ENCODE measurements at regions of chr12 and their contacts with region 1.

Region 1: DNA sequence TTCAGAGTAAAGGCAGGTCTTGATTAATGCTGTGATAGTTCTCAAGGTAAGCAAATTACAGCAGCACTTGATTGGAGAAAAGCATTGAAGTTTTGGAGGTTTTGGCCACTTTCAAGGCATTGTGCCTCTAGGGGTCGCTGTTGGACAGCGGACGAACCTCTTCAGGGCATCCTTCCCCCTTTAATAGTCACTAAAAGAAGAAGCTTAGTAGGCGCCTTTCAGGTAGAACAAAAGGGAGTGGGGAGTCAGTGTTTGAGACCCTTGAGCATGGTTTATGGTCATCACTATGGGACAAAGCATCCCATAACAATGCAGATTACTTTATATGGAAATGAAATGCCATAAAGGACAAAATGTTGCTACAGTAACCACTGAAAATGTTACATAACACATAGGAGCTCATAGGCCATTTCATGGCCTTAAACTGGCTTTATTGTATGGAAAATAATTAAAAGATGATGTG is 199.5 kb upstream of the DCN start:
- DNase-seq: peak; percentile 70 to 96 (median 88)
- H3K4me3 ChIP-seq: peak overlapping the region in 3 of 4 donors; percentile 19 to 65 (median 53)
- H3K27ac ChIP-seq: peak overlapping the region; percentile 59 to 86 (median 76)
- H3K4me1 ChIP-seq: peaks cover 5 to 22% of the 10 kb centered on the region in 2 donors
- H3K27me3 ChIP-seq: no peaks in the 10 kb centered on the region
- CTCF ChIP-seq: peak; percentile 84 to 95 (median 90)
- POLR2A ChIP-seq: no peak

Region 2: GRCh38 chr12:91163116-91163515 is 219.0 kb before region 1 on chr12:
- intact Hi-C with region 1: no loop called
- DNase-seq: no peak
- H3K4me3 ChIP-seq: no peak overlapping the region
- H3K27ac ChIP-seq: no peak overlapping the region
- H3K4me1 ChIP-seq: no peaks in the 10 kb centered on the region
- H3K27me3 ChIP-seq: no peaks in the 10 kb centered on the region
- CTCF ChIP-seq: no peak
- POLR2A ChIP-seq: no peak

Region 3: GRCh38 chr12:91577586-91578539 is 195.8 kb after region 1 on chr12:
- intact Hi-C with region 1: loop called in 1 of 2 experiments (anchors 10 kb)
- DNase-seq: no peak
- H3K4me3 ChIP-seq: peak overlapping the region in 1 of 4 donors; percentile 52
- H3K27ac ChIP-seq: peak overlapping the region in 1 of 5 donors; percentile 50
- H3K4me1 ChIP-seq: peaks cover 0 to 13% of the 10 kb centered on the region in 2 donors
- H3K27me3 ChIP-seq: no peaks in the 10 kb centered on the region
- CTCF ChIP-seq: peak; percentile 58 to 84 (median 76)
- POLR2A ChIP-seq: no peak

Region 4: DNA sequence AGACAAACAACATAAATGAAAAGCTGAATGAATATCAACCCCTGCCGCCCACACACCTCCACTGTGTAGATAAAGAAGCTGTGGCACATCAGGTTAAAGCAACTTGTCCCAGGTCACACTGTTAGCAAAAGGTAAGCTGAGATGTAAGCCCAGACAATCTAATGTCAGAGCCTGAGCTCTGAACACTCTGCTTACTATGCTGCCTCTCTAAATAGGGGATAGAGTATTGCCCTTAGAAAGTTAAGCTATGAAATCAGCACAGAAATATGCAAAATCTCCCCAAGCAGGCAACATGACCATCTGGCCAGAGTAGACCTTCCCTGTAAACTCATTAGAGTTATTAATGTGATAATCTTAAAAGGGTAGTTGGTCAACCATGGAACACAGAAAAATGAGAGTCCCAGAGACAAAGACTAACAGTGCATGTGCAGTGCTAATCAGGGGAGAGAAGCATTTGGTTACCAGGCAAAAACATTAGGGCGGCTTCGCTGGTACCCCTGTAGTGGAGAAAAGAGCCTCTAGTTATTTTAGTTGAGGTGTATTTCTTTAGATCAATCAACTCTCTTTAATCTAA is 592.5 kb after region 1 on chr12:
- intact Hi-C with region 1: no loop called
- DNase-seq: no peak
- H3K4me3 ChIP-seq: no peak overlapping the region
- H3K27ac ChIP-seq: no peak overlapping the region
- H3K4me1 ChIP-seq: peaks cover 0 to 3% of the 10 kb centered on the region in 2 donors
- H3K27me3 ChIP-seq: no peaks in the 10 kb centered on the region
- CTCF ChIP-seq: no peak
- POLR2A ChIP-seq: no peak